ENCODE measurements at regions of chr9 and their contacts with region 1.

Region 1: DNA sequence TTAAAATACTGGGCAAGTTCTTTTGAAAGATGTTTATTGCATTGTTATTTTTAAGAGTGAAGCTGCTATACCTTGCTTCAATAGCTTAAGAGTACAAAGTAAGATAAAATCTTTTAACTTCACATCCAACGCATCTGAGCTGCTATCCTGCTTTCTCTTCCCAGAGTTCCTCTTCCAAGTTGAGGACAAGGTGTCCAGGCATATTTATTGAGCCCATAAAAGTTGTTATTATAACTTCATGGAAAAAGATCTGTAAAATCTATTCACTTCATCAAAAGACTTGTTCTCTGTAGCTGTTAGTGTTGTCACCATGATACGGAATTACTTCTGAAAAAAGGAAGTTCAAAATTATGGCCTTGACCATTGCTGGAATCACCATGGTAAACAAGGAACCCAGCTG is 306.2 kb upstream of the ELAVL2 start:
- DNase-seq: no peak
- H3K4me3 ChIP-seq: no peak overlapping the region
- H3K27ac ChIP-seq: no peak overlapping the region
- H3K27me3 ChIP-seq: no peaks in the 10 kb centered on the region
- CTCF ChIP-seq: no peak

Region 2: DNA sequence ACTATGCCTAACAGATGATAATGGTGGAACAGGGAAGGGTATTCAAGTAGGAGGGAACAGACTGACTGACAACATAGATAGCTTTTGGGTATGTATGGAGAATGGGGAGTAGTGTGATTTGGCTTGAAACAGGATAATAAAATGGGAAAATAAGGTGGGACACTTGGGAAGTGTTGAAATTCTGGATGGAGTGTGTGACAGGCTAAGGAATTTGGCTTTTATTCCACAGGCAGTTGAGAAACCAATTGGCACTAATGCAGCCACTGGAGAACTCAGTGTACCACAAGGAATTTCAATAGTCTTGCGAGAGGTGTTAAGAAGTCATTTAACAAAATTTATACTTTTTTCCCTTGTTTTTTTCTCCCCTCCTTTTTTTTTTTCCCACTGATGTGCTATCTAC is 152.8 kb before region 1 on chr9:
- CTCF ChIA-PET with region 1: no interaction called
- POLR2A ChIA-PET with region 1: no interaction called
- DNase-seq: no peak
- H3K4me3 ChIP-seq: no peak overlapping the region
- H3K27ac ChIP-seq: no peak overlapping the region
- H3K27me3 ChIP-seq: no peaks in the 10 kb centered on the region
- CTCF ChIP-seq: no peak

Region 3: DNA sequence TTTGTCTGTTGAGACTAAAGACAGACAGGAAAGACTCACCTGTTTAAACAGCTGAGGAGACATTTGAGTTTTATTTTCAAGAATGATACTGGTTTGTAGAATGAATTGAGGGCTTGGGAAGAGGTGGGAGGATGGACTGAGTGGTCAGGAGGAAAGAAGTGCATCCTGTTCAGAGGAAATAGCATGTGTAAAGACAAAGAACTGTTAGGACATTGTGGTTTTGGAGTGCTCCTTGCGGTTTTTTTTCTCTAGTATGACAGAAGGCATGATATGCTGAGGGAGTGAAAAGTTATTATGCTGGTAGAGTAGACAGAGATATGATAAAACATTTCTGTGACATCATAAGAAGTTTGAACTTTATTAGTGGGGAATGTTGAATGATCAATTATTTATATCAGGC is 35.5 kb before region 1 on chr9:
- CTCF ChIA-PET with region 1: no interaction called
- POLR2A ChIA-PET with region 1: no interaction called
- DNase-seq: no peak
- H3K4me3 ChIP-seq: no peak overlapping the region
- H3K27ac ChIP-seq: no peak overlapping the region
- H3K27me3 ChIP-seq: no peaks in the 10 kb centered on the region
- CTCF ChIP-seq: no peak

Region 4: GRCh38 chr9:24118190-24118589 is 14.1 kb before region 1 on chr9:
- CTCF ChIA-PET with region 1: no interaction called
- POLR2A ChIA-PET with region 1: interaction called, 12 read pairs
- DNase-seq: no peak
- H3K4me3 ChIP-seq: no peak overlapping the region
- H3K27ac ChIP-seq: no peak overlapping the region
- H3K27me3 ChIP-seq: no peaks in the 10 kb centered on the region
- CTCF ChIP-seq: no peak

Region 5: GRCh38 chr9:24518545-24518944 is 386.3 kb after region 1 on chr9:
- CTCF ChIA-PET with region 1: no interaction called
- POLR2A ChIA-PET with region 1: no interaction called
- DNase-seq: no peak
- H3K4me3 ChIP-seq: no peak overlapping the region
- H3K27ac ChIP-seq: no peak overlapping the region
- H3K27me3 ChIP-seq: no peaks in the 10 kb centered on the region
- CTCF ChIP-seq: no peak